Right cardiac atrium (tissue), 5 donors: ENCODE measurements at regions of chr11 and their contacts with region 1.

Region 1: GRCh38 chr11:128405714-128406662 is 181.4 kb downstream of the ETS1 start:
- DNase-seq: peak in 1 of 3 donors; percentile 41
- ATAC-seq: peak; percentile 52 to 62
- H3K4me3 ChIP-seq: no peak overlapping the region
- H3K27ac ChIP-seq: no peak overlapping the region
- H3K4me1 ChIP-seq: peaks cover 5% of the 10 kb centered on the region
- H3K27me3 ChIP-seq: no peaks in the 10 kb centered on the region

Region 2: GRCh38 chr11:128336203-128336602 is 69.8 kb before region 1 on chr11:
- intact Hi-C with region 1: loop called in 1 of 4 experiments (anchors 5 kb)
- DNase-seq: peak; percentile 77 to 85 (median 82)
- ATAC-seq: peak; percentile 85 to 91
- H3K4me3 ChIP-seq: no peak overlapping the region
- H3K27ac ChIP-seq: peak overlapping the region; percentile 72
- H3K4me1 ChIP-seq: peaks cover 8% of the 10 kb centered on the region
- H3K27me3 ChIP-seq: no peaks in the 10 kb centered on the region